B cell (primary cell): ENCODE measurements at regions of chr21 and their contacts with region 1.

Region 1: DNA sequence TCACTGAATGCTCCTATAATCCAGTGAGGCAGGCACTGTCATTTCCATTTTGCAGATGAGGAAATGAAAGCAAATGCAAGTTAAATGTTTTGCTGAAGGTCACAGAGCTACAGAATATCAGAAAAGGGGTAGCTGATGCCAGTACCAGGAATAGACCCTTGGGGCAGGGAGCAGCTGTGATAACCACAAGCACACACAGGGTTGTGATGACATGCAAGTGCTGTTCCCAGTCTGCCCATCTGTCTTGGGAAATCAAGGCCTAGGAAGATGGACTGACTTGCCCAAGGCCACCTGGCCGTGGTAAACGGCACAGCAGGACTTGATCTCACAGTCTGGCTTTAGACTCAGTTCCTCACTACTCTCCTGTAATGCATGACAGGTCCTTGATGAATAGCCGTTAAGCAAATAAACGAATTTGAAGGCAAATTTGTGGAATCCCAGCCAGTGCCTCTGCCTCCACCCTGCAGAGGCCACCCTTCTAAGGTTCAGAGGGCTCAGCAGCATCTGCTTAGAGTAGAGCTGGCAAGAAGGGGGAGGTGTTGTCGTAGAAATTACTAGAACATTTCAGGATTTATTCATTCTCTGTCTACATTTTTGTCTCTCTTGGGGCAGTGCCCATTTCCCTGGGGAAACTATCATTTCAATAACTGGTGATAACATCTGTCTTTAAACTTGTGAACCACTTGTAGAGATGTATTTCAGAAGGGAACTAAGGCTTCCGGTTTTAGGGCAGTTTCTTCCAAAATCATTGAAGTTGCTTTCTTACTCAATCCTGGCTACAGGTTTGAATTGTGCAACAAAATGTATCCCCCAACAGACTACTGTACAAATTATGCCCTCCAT is 53.2 kb upstream of the MRPS6 start:
- DNase-seq: peak; percentile 73
- ATAC-seq: peak; percentile 62
- H3K4me3 ChIP-seq: peak overlapping the region in 2 of 5 experiments; percentile 15 to 16
- H3K4me3 Mint-ChIP-seq: peak overlapping the region; percentile 85
- H3K27ac ChIP-seq: peak overlapping the region; percentile 70 to 83
- H3K27ac Mint-ChIP-seq: peak overlapping the region; percentile 96
- H3K4me1 ChIP-seq: peaks cover 50 to 56% of the 10 kb centered on the region in 2 donors
- H3K4me1 Mint-ChIP-seq: peaks cover 50% of the 10 kb centered on the region
- H3K27me3 ChIP-seq: no peaks in the 10 kb centered on the region
- H3K27me3 Mint-ChIP-seq: no peaks in the 10 kb centered on the region
- CTCF ChIP-seq: peak; percentile 27

Region 2: DNA sequence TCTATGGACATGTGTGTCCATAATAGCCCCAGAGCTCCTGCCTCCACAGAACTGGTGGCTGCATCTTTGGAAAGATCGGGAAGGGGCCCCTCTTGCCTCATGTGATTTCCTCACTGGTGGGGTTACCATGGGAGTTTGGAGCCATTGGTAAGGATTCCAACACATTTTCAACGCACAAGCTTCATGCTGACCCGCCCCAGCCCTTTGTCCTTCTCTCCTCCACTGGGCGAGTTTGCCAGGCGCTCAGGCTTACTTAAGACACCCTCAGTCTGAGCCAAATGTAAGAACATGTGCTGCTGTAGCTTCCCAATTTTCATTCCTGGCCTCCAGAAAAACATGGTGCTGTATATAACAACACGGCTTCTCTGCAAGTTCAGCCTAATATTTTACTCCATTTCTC is 177.0 kb before region 1 on chr21:
- CTCF ChIA-PET with region 1: no interaction called
- POLR2A ChIA-PET with region 1: no interaction called
- intact Hi-C with region 1: no loop called
- DNase-seq: no peak
- ATAC-seq: no peak
- H3K4me3 ChIP-seq: no peak overlapping the region
- H3K4me3 Mint-ChIP-seq: no peak overlapping the region
- H3K27ac ChIP-seq: no peak overlapping the region
- H3K27ac Mint-ChIP-seq: no peak overlapping the region
- H3K4me1 ChIP-seq: no peaks in the 10 kb centered on the region
- H3K4me1 Mint-ChIP-seq: peaks cover 3% of the 10 kb centered on the region
- H3K27me3 ChIP-seq: peaks cover 0 to 2% (median 0%) of the 10 kb centered on the region in 4 experiments
- H3K27me3 Mint-ChIP-seq: no peaks in the 10 kb centered on the region
- CTCF ChIP-seq: no peak

Region 3: DNA sequence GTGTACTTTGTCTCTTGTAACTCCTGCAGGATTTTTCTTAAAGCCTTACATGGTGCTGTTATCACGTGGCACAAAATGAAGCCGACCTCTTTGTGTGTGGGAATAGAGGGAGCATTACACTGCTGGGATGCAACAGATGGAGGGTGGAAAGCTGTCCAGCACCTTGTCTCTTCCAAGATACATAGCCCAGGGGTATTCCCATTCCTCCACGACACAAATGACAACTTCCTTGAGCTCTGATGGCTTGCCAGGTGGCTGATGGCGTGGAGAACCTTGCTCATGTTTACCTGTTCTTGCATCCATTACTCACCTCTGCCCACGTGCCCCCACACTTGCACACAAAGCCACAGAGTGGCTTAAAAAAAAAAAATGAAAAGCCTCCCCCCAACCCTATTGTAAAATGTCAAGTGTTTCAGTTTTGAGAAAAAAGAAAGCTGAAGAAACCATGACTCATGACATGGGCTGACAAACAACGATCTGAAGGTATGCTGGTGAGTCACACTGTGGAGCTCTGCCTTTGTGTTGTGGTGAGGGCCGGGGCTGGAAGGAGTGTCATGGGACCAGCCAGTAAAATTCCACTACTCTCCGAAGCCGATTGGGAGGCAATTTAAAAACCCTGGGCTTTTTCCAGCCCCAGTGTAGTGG is 72.7 kb before region 1 on chr21:
- CTCF ChIA-PET with region 1: no interaction called
- POLR2A ChIA-PET with region 1: interaction called, 8 read pairs
- intact Hi-C with region 1: loop called (anchors 1 kb)
- DNase-seq: peak; percentile 48
- ATAC-seq: peak; percentile 67
- H3K4me3 ChIP-seq: no peak overlapping the region
- H3K4me3 Mint-ChIP-seq: peak overlapping the region; percentile 64
- H3K27ac ChIP-seq: peak overlapping the region; percentile 74 to 83
- H3K27ac Mint-ChIP-seq: peak overlapping the region; percentile 95
- H3K4me1 ChIP-seq: peaks cover 31 to 42% of the 10 kb centered on the region in 2 donors
- H3K4me1 Mint-ChIP-seq: peaks cover 50% of the 10 kb centered on the region
- H3K27me3 ChIP-seq: no peaks in the 10 kb centered on the region
- H3K27me3 Mint-ChIP-seq: no peaks in the 10 kb centered on the region
- CTCF ChIP-seq: no peak

Region 4: DNA sequence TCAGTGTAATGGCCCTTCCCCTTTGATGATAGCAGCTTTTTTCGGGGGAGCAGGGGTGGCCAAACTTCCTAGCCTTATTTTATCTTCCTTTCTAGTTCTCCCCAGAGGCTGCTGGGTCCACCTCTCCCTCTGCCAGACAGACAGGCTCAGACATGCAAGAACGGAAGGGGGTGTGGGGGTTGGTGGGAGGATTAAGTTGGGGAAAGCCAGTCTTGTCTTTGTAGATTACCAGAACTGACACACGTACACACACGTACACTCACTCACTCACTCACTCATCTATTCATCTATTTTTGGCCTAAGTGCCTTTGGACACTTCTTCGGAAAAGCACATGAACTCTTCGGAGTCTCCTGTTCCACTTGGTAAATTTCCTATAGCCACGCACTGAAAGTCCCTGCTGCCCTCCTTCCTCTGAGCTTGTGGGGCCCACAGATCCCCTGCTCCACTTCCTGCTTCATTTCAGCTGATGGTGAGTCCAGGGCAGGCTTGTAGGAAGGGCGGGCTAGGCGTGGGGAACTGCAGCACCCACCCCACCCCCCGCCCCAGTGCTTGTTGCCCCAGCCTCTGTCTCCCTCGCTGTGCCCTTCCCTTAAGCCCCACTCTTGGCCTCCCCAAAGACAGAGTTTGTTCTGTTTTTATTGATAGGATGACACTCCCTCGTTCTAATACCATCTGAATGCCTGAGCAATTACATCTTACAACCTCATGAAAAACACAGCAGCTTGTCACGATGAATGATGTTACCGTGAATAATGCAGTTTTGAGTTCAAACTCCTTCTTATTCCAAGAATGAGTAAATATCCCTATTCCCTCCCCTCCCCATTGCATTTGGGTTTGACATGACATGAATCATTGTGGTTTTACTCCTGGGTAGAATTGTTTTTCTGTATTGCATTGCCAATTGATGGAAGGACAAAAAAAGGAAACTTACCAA is 43.9 kb before region 1 on chr21:
- CTCF ChIA-PET with region 1: no interaction called
- POLR2A ChIA-PET with region 1: no interaction called
- intact Hi-C with region 1: loop called (anchors 1 kb)
- DNase-seq: peak; percentile 29
- ATAC-seq: peak; percentile 26
- H3K4me3 ChIP-seq: peak overlapping the region in 2 of 5 experiments; percentile 14 to 37
- H3K4me3 Mint-ChIP-seq: peak overlapping the region; percentile 69
- H3K27ac ChIP-seq: peak overlapping the region; percentile 42 to 57
- H3K27ac Mint-ChIP-seq: peak overlapping the region; percentile 80
- H3K4me1 ChIP-seq: peaks cover 17 to 29% of the 10 kb centered on the region in 2 donors
- H3K4me1 Mint-ChIP-seq: peaks cover 34% of the 10 kb centered on the region
- H3K27me3 ChIP-seq: no peaks in the 10 kb centered on the region
- H3K27me3 Mint-ChIP-seq: no peaks in the 10 kb centered on the region
- CTCF ChIP-seq: no peak